ENCODE measurements at regions of chr7 and their contacts with region 1.

Region 1: DNA sequence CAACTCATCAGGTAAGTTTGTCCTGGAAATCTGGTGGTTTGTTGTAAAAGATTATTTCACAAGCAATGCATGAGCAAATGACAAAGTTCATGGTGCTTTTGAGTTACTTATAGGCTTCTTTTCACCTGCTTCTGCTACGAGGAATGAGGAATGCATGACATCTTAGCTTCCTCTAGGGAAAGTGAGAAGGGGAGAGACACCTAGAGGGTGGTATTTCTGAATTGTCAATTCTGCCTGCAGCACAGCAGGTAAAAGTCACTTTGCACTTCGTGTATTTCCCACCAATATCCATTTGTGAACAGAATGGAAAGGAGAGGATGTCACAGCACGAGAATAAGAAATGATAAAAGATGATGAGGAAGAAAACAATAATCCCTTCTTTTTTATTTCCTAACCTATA is 153.4 kb upstream of the FEZF1 start:
- DNase-seq: no peak
- H3K4me3 ChIP-seq: no peak overlapping the region
- H3K27ac ChIP-seq: no peak overlapping the region
- H3K4me1 ChIP-seq: no peaks in the 10 kb centered on the region
- H3K27me3 ChIP-seq: no peaks in the 10 kb centered on the region
- CTCF ChIP-seq: no peak

Region 2: GRCh38 chr7:122143751-122144711 is 313.9 kb before region 1 on chr7 and contains the start of gene AASS:
- CTCF ChIA-PET with region 1: no interaction called
- POLR2A ChIA-PET with region 1: interaction called, 11 read pairs
- intact Hi-C with region 1: no loop called
- DNase-seq: peak; percentile 69 to 92
- H3K4me3 ChIP-seq: peak within 1 kb of the TSS; percentile 93
- H3K27ac ChIP-seq: no peak within 1 kb of the TSS
- H3K4me1 ChIP-seq: peaks cover 11% of the 10 kb centered on the region; the same call in 1 of the 2 replicates
- H3K27me3 ChIP-seq: no peaks in the 10 kb centered on the region
- CTCF ChIP-seq: no peak
- total RNA-seq, gene AASS: 6.5 and 8.5 TPM in 2 replicates

Region 3: DNA sequence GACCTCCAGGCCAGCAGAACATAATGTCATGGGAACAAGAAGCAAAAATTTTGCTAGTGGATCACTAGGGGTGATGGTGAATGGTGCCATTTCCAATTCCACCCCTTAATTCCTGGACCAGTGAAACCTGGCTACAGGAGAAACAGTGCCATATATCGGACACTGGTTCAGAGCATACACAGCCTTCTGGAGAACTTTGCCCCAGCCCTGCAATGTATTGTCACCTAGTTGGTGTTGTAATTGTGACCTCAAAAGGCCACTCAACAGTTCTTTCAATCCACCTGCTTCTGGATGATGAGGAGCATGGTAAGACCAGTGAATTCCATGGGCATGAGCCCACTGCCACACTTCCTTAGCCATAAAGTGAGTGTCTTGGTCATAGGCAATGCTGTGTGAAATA is 254.2 kb before region 1 on chr7:
- CTCF ChIA-PET with region 1: no interaction called
- POLR2A ChIA-PET with region 1: no interaction called
- intact Hi-C with region 1: no loop called
- DNase-seq: no peak
- H3K4me3 ChIP-seq: no peak overlapping the region
- H3K27ac ChIP-seq: no peak overlapping the region
- H3K4me1 ChIP-seq: no peaks in the 10 kb centered on the region
- H3K27me3 ChIP-seq: no peaks in the 10 kb centered on the region
- CTCF ChIP-seq: no peak

Region 4: DNA sequence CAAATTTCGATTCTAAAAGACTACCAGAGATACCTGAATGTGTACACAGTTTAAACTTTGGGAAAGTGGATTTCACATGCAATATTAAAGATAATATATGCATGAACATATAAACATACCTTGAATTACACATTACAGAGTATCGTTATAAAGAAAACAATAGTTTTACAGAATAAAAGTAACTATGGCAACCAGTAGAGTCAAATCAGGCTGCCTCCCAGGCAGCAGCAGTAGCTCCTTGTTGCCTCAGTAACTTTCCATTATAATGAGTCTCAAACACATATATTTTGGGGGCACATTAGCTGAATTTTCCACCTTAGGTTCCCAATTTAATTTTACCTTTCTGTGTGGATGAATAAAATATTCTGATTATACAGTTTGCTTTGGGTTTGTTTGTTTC is 11.0 kb after region 1 on chr7:
- CTCF ChIA-PET with region 1: no interaction called
- POLR2A ChIA-PET with region 1: no interaction called
- intact Hi-C with region 1: no loop called
- DNase-seq: no peak
- H3K4me3 ChIP-seq: no peak overlapping the region
- H3K27ac ChIP-seq: no peak overlapping the region
- H3K4me1 ChIP-seq: no peaks in the 10 kb centered on the region
- H3K27me3 ChIP-seq: no peaks in the 10 kb centered on the region
- CTCF ChIP-seq: no peak

Region 5: GRCh38 chr7:123836656-123837055 is 1378.7 kb after region 1 on chr7:
- CTCF ChIA-PET with region 1: no interaction called
- POLR2A ChIA-PET with region 1: no interaction called
- intact Hi-C with region 1: no loop called
- DNase-seq: no peak
- H3K4me3 ChIP-seq: no peak overlapping the region
- H3K27ac ChIP-seq: no peak overlapping the region
- H3K4me1 ChIP-seq: no peaks in the 10 kb centered on the region
- H3K27me3 ChIP-seq: no peaks in the 10 kb centered on the region
- CTCF ChIP-seq: no peak

Measured in PC-9 (cell line).